GM12878 (cell line): ENCODE measurements at regions of chr1 and their contacts with region 1.

Region 1: DNA sequence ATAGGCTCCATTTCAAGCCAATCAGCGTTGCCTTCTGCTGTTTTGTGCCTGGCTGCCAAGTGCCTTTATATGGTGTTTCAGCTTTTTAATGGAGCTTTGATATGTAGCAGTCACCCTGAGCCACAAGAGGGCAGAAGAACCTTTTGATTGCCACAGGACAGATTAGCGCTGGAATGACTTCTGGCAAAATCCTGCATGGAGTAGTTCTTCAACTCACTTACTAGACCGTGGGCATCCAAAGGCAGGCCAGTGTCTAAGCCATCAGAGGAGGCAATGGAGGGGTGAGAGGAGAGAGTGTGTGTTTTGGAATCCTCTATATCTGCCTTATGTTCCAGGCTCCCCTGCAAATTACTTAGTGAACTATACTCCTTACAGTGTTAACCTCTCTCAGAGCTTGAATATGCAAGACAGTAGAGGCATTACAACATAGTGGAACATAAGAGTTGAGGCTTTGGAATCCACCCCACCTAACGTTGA is 56.2 kb downstream of the ST3GAL3 start:
- DNase-seq: peak; percentile 72
- ATAC-seq: peak; percentile 87
- H3K4me3 ChIP-seq: no peak overlapping the region
- H3K27ac ChIP-seq: no peak overlapping the region
- H3K4me1 ChIP-seq: peaks cover 18% of the 10 kb centered on the region
- H3K27me3 ChIP-seq: no peaks in the 10 kb centered on the region
- CTCF ChIP-seq: peak; percentile 83 to 98 (median 92)
- EP300 ChIP-seq: no peak
- POLR2A ChIP-seq: no peak
- RAD21 ChIP-seq: peak; percentile 99

Region 2: GRCh38 chr1:43753422-43753821 is 10.1 kb before region 1 on chr1:
- CTCF ChIA-PET with region 1: interaction called, 19 read pairs
- POLR2A ChIA-PET with region 1: interaction called, 5 read pairs
- RAD21 ChIA-PET with region 1: interaction called, 9 read pairs
- SMC1A ChIA-PET with region 1: interaction called, 19 read pairs
- in situ Hi-C with region 1: no loop called
- intact Hi-C with region 1: no loop called
- DNase-seq: no peak
- ATAC-seq: peak; percentile 45
- H3K4me3 ChIP-seq: no peak overlapping the region
- H3K27ac ChIP-seq: no peak overlapping the region
- H3K4me1 ChIP-seq: no peaks in the 10 kb centered on the region
- H3K27me3 ChIP-seq: no peaks in the 10 kb centered on the region
- CTCF ChIP-seq: no peak
- EP300 ChIP-seq: no peak
- POLR2A ChIP-seq: no peak
- RAD21 ChIP-seq: no peak

Region 3: GRCh38 chr1:43836267-43836951 is 72.9 kb after region 1 on chr1:
- CTCF ChIA-PET with region 1: interaction called, 25 read pairs
- POLR2A ChIA-PET with region 1: interaction called, 7 read pairs
- RAD21 ChIA-PET with region 1: interaction called, 29 read pairs
- SMC1A ChIA-PET with region 1: interaction called, 47 read pairs
- in situ Hi-C with region 1: no loop called
- intact Hi-C with region 1: loop called (anchors 2 kb)
- DNase-seq: peak; percentile 88
- ATAC-seq: peak; percentile 69
- H3K4me3 ChIP-seq: no peak overlapping the region
- H3K27ac ChIP-seq: peak overlapping the region; percentile 95
- H3K4me1 ChIP-seq: peaks cover 67% of the 10 kb centered on the region
- H3K27me3 ChIP-seq: no peaks in the 10 kb centered on the region
- CTCF ChIP-seq: no peak
- EP300 ChIP-seq: no peak
- POLR2A ChIP-seq: 0 out of 2 replicates have a peak, but pooled peaks have one; percentile 32
- RAD21 ChIP-seq: no peak

Region 4: GRCh38 chr1:43868741-43869067 is 105.2 kb after region 1 on chr1:
- CTCF ChIA-PET with region 1: interaction called, 20 read pairs
- POLR2A ChIA-PET with region 1: no interaction called
- RAD21 ChIA-PET with region 1: interaction called, 8 read pairs
- SMC1A ChIA-PET with region 1: interaction called, 11 read pairs
- in situ Hi-C with region 1: no loop called
- intact Hi-C with region 1: no loop called
- DNase-seq: no peak
- ATAC-seq: no peak
- H3K4me3 ChIP-seq: no peak overlapping the region
- H3K27ac ChIP-seq: no peak overlapping the region
- H3K4me1 ChIP-seq: peaks cover 11% of the 10 kb centered on the region; the same call in 1 of the 2 replicates
- H3K27me3 ChIP-seq: no peaks in the 10 kb centered on the region
- CTCF ChIP-seq: no peak
- EP300 ChIP-seq: no peak
- POLR2A ChIP-seq: no peak
- RAD21 ChIP-seq: no peak

Region 5: GRCh38 chr1:43934101-43934985 is 170.8 kb after region 1 on chr1:
- CTCF ChIA-PET with region 1: interaction called, 1,117 read pairs
- POLR2A ChIA-PET with region 1: interaction called, 24 read pairs
- RAD21 ChIA-PET with region 1: interaction called, 587 read pairs
- SMC1A ChIA-PET with region 1: interaction called, 481 read pairs
- in situ Hi-C with region 1: loop called (anchors 5 kb)
- intact Hi-C with region 1: loop called (anchors 1 kb)
- DNase-seq: no peak
- ATAC-seq: peak; percentile 92
- H3K4me3 ChIP-seq: peak overlapping the region; percentile 60
- H3K27ac ChIP-seq: no peak overlapping the region
- H3K4me1 ChIP-seq: peaks cover 11% of the 10 kb centered on the region
- H3K27me3 ChIP-seq: no peaks in the 10 kb centered on the region
- CTCF ChIP-seq: peak; percentile 84 to 92 (median 85)
- EP300 ChIP-seq: no peak
- POLR2A ChIP-seq: no peak
- RAD21 ChIP-seq: peak; percentile 80

Region 6: DNA sequence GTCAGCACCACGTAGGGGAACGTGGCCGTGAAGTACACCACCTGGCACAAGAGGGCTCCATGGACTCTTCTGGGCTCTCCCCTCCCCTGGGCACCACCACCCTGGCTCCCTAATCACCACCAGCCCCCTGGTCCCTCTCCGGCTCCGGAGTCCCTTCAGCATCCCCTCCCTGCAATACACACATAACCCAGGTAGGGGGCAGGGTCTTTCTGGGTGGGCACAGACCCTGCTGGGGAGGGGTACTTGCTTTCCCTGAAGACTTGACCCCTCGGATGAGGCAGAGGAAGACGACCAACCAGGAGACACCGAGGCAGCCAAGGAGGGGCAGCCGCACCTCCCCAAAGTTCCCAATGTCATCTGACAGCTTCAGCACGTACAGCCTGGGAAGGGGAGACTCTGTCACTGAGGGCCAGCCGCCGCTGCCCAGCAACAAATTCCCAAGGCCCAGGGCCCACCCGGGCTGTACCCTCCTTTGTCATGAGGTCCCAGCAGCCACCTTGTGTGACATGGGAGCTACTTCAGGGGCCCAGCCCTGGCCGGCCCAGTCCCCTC is 239.1 kb after region 1 on chr1:
- CTCF ChIA-PET with region 1: interaction called, 12 read pairs
- POLR2A ChIA-PET with region 1: interaction called, 7 read pairs
- RAD21 ChIA-PET with region 1: interaction called, 3 read pairs
- SMC1A ChIA-PET with region 1: interaction called, 8 read pairs
- in situ Hi-C with region 1: no loop called
- intact Hi-C with region 1: no loop called
- DNase-seq: no peak
- ATAC-seq: no peak
- H3K4me3 ChIP-seq: no peak overlapping the region
- H3K27ac ChIP-seq: no peak overlapping the region
- H3K4me1 ChIP-seq: no peaks in the 10 kb centered on the region
- H3K27me3 ChIP-seq: no peaks in the 10 kb centered on the region
- CTCF ChIP-seq: 0 out of 6 replicates have a peak, but pooled peaks of 1 of the 3 experiments have one; percentile 28
- EP300 ChIP-seq: no peak
- POLR2A ChIP-seq: no peak
- RAD21 ChIP-seq: no peak